A549 (cell line): ENCODE measurements at regions of chr19 and their contacts with region 1.

Region 1: GRCh38 chr19:18895038-18895823 is 727 bp downstream of the CERS1 start:
- DNase-seq: peak; percentile 66 to 74
- ATAC-seq: peak; percentile 72 to 87
- H3K4me3 ChIP-seq: peak overlapping the region; percentile 76
- H3K27ac ChIP-seq: peak overlapping the region; percentile 66 to 83; a peak in 5 of 6 replicates
- H3K4me1 ChIP-seq: peaks cover 11% of the 10 kb centered on the region; the same call in 2 of the 3 replicates
- CTCF ChIP-seq: peak; percentile 48; the same call in 2 of the 3 replicates
- EP300 ChIP-seq: no peak
- POLR2A ChIP-seq: no peak
- RAD21 ChIP-seq: peak; percentile 38 to 45; a peak in 4 of 5 replicates

Region 2: DNA sequence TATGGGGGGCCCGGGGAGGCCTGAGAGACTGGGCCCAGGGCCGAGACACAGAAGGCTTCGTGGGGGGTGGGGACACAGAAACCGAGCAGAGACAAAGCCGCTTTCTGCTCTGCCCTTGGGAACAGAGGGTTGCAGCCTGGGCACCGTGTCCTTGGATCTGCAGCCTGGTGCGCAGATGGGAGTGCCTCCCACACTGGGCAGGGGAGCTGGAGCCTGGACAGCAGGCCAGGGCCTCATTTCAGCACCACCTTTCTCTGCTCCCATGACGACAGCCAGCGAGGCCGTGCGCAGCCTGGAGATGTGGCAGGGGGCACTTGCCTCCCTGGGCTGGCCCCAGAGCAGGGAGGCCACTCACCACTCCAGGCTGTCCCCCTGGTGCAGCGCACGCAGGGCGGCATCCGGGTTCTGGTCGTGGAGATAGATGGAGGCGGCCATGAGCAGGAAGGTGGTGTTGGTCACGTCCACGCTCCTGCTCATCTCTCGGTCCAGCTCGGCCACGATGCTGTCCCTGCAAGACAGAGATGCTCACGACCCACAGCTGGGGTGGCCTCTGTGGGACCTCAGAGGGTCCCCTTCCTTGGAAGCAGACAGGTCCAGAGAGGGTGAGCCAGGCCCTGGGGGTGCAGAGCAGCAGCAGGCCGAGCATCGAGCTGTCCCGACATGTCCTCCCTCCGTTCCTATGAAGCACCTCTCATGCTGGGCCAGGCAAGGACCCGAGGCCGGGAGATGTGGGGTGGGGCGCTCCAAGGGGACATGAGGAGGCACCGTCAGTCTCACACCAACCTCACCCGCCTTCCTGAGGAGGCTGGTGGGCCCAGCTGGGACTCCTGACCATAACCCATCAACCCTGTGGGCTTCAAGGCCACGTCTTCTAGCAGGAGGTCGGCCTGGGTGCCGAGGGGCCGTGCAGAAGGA is 11.6 kb after region 1 on chr19:
- CTCF ChIA-PET with region 1: interaction called, 13 read pairs
- POLR2A ChIA-PET with region 1: no interaction called
- DNase-seq: no peak
- ATAC-seq: no peak
- H3K4me3 ChIP-seq: no peak overlapping the region
- H3K27ac ChIP-seq: no peak overlapping the region
- H3K4me1 ChIP-seq: no peaks in the 10 kb centered on the region
- CTCF ChIP-seq: no peak
- EP300 ChIP-seq: no peak
- POLR2A ChIP-seq: no peak
- RAD21 ChIP-seq: no peak

Region 3: DNA sequence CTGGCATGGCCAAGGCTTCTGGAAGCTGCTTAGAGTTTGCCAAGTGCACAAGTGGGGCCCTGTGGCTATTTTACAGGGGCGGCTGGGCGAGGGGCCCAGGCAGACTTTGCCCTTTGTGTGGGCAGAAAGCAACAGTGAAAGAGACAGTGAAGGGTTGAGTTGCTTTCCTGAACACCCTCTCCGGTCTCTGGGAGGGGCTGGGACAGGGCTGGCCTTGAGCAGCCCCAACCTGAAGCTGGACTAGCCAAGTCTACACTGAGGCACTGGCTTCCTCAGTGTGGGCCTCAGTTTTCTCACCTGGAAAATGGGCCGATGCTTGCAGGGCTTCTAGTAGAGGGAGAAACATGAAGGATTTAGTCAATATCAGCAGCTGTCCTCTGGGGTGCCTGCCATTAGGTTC is 48.2 kb after region 1 on chr19:
- CTCF ChIA-PET with region 1: no interaction called
- POLR2A ChIA-PET with region 1: no interaction called
- DNase-seq: no peak
- ATAC-seq: no peak
- H3K4me3 ChIP-seq: no peak overlapping the region
- H3K27ac ChIP-seq: no peak overlapping the region
- H3K4me1 ChIP-seq: peaks cover 8% of the 10 kb centered on the region; the same call in 1 of the 3 replicates
- CTCF ChIP-seq: no peak
- EP300 ChIP-seq: no peak
- POLR2A ChIP-seq: no peak
- RAD21 ChIP-seq: no peak